Heart left ventricle (tissue), 16 donors: ENCODE measurements at regions of chr16 and their contacts with region 1.

Region 1: GRCh38 chr16:16127469-16128116 is 95.7 kb downstream of the ABCC6 start:
- DNase-seq: peak in 3 of 5 donors; percentile 50 to 60 (median 59)
- ATAC-seq: peak; percentile 64 to 88 (median 85)
- H3K4me3 ChIP-seq: no peak overlapping the region
- H3K27ac ChIP-seq: peak overlapping the region in 1 of 12 donors; percentile 71
- H3K4me1 ChIP-seq: no peaks in the 10 kb centered on the region
- H3K27me3 ChIP-seq: no peaks in the 10 kb centered on the region
- CTCF ChIP-seq: peak; percentile 82 to 93 (median 87)
- POLR2A ChIP-seq: no peak

Region 2: GRCh38 chr16:15765880-15766279 is 361.7 kb before region 1 on chr16:
- intact Hi-C with region 1: loop called (anchors 2 to 5 kb)
- DNase-seq: peak in 3 of 5 donors; percentile 25 to 34 (median 30)
- ATAC-seq: peak; percentile 37 to 87 (median 78)
- H3K4me3 ChIP-seq: no peak overlapping the region
- H3K27ac ChIP-seq: peak overlapping the region in 1 of 12 donors; percentile 52
- H3K4me1 ChIP-seq: peaks cover 0 to 15% (median 4%) of the 10 kb centered on the region in 12 donors
- H3K27me3 ChIP-seq: peaks cover 0 to 7% (median 0%) of the 10 kb centered on the region in 9 donors
- CTCF ChIP-seq: peak; percentile 44 to 82 (median 68)
- POLR2A ChIP-seq: no peak

Region 3: DNA sequence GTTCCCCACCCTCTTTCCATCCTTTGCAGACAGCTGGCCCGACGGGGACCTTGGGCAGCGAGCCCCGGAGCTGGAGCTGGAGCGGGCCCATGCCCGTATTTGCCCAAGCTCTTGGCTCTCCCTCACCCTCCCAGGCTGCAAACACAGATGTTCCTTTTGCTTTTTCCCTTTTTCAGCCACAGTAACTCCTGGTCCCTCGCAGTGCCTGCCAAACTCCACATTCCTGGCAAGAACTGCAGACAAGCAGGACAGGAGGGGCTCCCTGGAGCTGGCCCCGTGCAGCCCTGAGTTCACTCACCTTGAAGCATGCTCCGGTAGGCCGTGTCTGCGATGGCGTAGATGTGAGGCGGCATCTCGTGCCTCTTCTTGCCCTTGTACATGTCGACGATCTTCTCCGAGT is 304.6 kb before region 1 on chr16:
- intact Hi-C with region 1: loop called in 1 of 10 experiments (anchors 5 kb)
- DNase-seq: no peak
- ATAC-seq: no peak
- H3K4me3 ChIP-seq: no peak overlapping the region
- H3K27ac ChIP-seq: peak overlapping the region in 1 of 12 donors; percentile 87
- H3K4me1 ChIP-seq: no peaks in the 10 kb centered on the region
- H3K27me3 ChIP-seq: no peaks in the 10 kb centered on the region
- CTCF ChIP-seq: no peak
- POLR2A ChIP-seq: no peak

Region 4: GRCh38 chr16:15874745-15875314 is 252.8 kb before region 1 on chr16:
- intact Hi-C with region 1: loop called (anchors 1 to 5 kb)
- DNase-seq: peak in 4 of 5 donors; percentile 29 to 40 (median 36)
- ATAC-seq: peak in 3 of 4 donors; percentile 76 to 90 (median 77)
- H3K4me3 ChIP-seq: no peak overlapping the region
- H3K27ac ChIP-seq: peak overlapping the region in 4 of 12 donors; percentile 9 to 76 (median 19)
- H3K4me1 ChIP-seq: peaks cover 0 to 16% (median 3%) of the 10 kb centered on the region in 12 donors
- H3K27me3 ChIP-seq: no peaks in the 10 kb centered on the region
- CTCF ChIP-seq: peak; percentile 49 to 82 (median 70)
- POLR2A ChIP-seq: no peak

Region 5: DNA sequence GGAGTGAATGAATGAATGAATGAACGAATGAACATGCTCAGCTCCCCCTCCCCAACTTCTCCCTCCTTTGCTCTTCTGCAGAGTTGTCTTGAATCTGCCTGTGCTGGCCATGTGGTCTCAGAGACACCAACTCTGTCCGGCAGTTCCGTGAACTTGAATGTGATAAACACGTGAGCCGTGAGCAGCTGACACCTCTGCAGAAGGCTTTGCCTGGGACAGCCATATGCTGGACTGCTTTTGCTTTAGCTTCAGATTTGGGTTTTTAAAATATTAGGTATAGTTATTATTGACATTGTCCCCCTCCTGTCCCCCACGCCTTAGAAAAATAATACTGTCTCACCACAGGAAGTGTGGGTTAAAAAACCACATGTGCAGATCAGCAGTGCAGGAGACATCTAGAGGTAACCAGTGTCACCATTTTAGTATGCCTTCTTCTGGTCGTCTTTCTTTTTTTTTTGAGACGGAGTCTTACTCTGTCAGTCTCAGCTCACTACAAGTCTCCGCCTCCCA is 94.3 kb before region 1 on chr16:
- intact Hi-C with region 1: loop called in 1 of 10 experiments (anchors 10 kb)
- DNase-seq: no peak
- ATAC-seq: peak in 1 of 4 donors; percentile 64
- H3K4me3 ChIP-seq: no peak overlapping the region
- H3K27ac ChIP-seq: peak overlapping the region in 1 of 12 donors; percentile 20
- H3K4me1 ChIP-seq: peaks cover 0 to 34% (median 11%) of the 10 kb centered on the region in 12 donors
- H3K27me3 ChIP-seq: no peaks in the 10 kb centered on the region
- CTCF ChIP-seq: no peak
- POLR2A ChIP-seq: no peak

Region 6: DNA sequence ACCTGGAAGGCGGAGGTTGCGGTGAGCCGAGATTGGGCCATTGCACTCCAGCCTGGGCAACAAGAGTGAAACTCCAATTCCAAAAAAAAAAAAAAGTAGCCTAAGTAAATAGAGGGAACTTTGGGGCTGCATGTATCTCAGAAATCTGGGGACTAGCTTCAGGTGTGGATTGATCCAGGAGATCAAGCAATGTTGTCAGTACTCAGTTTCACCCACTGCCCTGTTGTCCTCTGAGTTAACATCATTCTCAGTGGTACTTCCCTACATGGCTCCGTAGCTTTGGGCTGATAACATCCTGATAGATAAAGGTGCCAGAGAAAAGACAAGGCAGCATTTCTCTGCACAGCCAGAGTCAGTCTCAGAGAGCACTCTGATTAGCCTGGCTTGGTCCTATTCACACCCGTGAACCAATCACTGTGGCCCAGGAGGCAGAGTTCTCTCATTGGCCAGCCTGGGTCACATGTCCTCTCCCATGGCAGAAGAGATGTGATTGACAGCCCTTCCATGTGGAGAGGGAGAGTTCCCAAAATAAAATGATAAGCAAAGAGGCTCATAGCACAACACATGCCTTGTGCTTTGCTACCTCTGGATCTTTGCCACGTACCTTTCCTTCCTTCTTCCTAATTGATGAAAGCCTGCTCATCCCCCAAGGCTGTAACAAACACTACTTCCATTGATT is 78.5 kb before region 1 on chr16:
- intact Hi-C with region 1: loop called in 1 of 10 experiments (anchors 5 kb)
- DNase-seq: peak; percentile 54 to 73 (median 62)
- ATAC-seq: peak; percentile 93 to 95 (median 94)
- H3K4me3 ChIP-seq: no peak overlapping the region
- H3K27ac ChIP-seq: peak overlapping the region in 9 of 12 donors; percentile 1 to 62 (median 38)
- H3K4me1 ChIP-seq: peaks cover 0 to 17% (median 4%) of the 10 kb centered on the region in 12 donors
- H3K27me3 ChIP-seq: no peaks in the 10 kb centered on the region
- CTCF ChIP-seq: no peak
- POLR2A ChIP-seq: no peak

Region 7: GRCh38 chr16:16096121-16096857 is 31.3 kb before region 1 on chr16:
- intact Hi-C with region 1: no loop called
- DNase-seq: peak in 2 of 5 donors; percentile 18 to 42
- ATAC-seq: peak in 1 of 4 donors; percentile 31
- H3K4me3 ChIP-seq: no peak overlapping the region
- H3K27ac ChIP-seq: peak overlapping the region in 5 of 12 donors; percentile 21 to 85 (median 42)
- H3K4me1 ChIP-seq: peaks cover 0 to 15% (median 6%) of the 10 kb centered on the region in 12 donors
- H3K27me3 ChIP-seq: no peaks in the 10 kb centered on the region
- CTCF ChIP-seq: peak in 3 of 12 donors; percentile 4 to 14 (median 9)
- POLR2A ChIP-seq: no peak

Region 8: GRCh38 chr16:17050468-17050867 is 922.9 kb after region 1 on chr16:
- intact Hi-C with region 1: no loop called
- DNase-seq: no peak
- ATAC-seq: no peak
- H3K4me3 ChIP-seq: no peak overlapping the region
- H3K27ac ChIP-seq: no peak overlapping the region
- H3K4me1 ChIP-seq: no peaks in the 10 kb centered on the region
- H3K27me3 ChIP-seq: no peaks in the 10 kb centered on the region
- CTCF ChIP-seq: no peak
- POLR2A ChIP-seq: no peak